ENCODE measurements at regions of chr20 and their contacts with region 1.

Region 1: GRCh38 chr20:5100684-5101347 is 18.9 kb downstream of the PCNA start:
- DNase-seq: peak; percentile 39 to 85 (median 78)
- ATAC-seq: peak; percentile 96
- H3K4me3 ChIP-seq: no peak overlapping the region
- H3K4me3 Mint-ChIP-seq: no peak overlapping the region
- H3K27ac ChIP-seq: peak overlapping the region in 1 of 2 experiments; percentile 49
- H3K27ac Mint-ChIP-seq: peak overlapping the region; percentile 57
- H3K4me1 ChIP-seq: peaks cover 3% of the 10 kb centered on the region
- H3K4me1 Mint-ChIP-seq: peaks cover 8% of the 10 kb centered on the region
- H3K27me3 ChIP-seq: no peaks in the 10 kb centered on the region
- H3K27me3 Mint-ChIP-seq: no peaks in the 10 kb centered on the region
- CTCF ChIP-seq: peak; percentile 94

Region 2: DNA sequence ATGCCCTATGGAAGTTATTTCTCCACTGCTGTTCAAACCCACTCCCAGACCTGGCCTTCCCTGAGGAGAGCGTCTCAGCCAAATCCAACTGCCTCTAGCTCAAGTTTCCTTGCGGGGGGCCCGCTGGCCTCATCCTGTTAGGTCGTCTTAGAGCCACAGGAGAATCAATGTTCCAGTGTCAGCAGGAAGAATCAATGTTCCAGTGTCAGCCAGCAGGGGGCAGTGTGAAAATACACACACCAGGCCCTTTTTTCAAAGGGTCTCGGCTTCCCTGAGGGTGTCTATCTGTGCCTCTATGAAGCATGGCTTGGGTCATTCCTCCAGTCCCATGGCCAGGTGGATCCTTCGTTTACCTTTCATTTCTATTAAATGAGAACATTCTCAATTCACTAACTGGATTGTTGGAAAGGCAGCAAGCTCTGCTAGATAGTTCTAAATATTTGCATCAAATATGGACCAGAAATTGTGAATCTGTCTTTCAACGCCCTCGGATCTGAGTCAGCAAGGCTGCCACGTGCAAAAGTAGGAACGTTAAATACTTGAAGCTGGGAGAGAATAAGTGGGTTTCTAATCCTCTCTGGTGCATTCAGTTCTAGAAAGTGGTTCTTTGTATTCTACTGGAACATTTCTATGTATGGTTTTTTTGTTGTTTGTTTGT is 359.9 kb before region 1 on chr20:
- CTCF ChIA-PET with region 1: interaction called, 10 read pairs
- POLR2A ChIA-PET with region 1: no interaction called
- intact Hi-C with region 1: loop called in 1 of 2 experiments (anchors 5 kb)
- DNase-seq: peak; percentile 42 to 78 (median 66)
- ATAC-seq: peak; percentile 61
- H3K4me3 ChIP-seq: no peak overlapping the region
- H3K4me3 Mint-ChIP-seq: no peak overlapping the region
- H3K27ac ChIP-seq: no peak overlapping the region
- H3K27ac Mint-ChIP-seq: no peak overlapping the region
- H3K4me1 ChIP-seq: no peaks in the 10 kb centered on the region
- H3K4me1 Mint-ChIP-seq: no peaks in the 10 kb centered on the region
- H3K27me3 ChIP-seq: no peaks in the 10 kb centered on the region
- H3K27me3 Mint-ChIP-seq: peaks cover 11% of the 10 kb centered on the region
- CTCF ChIP-seq: peak; percentile 92

Region 3: DNA sequence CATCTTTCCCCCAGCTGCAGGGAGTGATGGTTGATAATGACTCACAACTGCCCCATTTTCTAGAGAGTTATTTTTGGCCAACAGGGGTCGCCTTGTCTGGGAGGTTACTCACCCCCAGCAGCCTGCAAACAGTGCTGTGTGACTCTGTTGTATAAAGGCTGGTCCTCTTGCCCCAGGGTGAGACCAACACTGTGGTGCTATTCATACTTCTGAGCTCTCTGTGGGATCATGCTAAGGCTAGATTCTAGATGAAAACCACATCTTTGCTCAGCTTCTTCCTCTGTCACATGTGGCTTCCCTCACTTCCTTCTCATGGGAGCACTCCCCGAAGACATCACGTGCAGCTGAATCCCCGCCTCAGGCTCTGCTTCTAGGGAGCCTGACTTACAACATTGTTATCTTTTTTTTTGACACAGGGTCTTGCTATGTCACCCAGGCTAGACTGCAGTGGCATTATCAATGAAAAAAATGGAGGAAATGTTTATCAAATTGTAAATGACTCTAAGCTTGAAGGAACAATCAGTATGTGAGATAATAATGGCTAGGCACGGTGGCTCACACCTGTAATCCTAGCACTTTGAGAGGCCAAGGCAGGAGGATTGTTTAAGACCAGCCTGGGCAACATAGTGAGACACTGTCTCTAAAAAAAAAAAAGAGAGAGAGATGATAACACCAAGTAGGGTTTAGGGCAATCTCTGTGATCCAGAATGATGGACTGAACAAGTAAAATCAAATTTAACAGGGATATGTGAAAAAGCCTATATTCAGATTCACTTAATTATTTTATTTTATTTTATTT is 43.8 kb before region 1 on chr20:
- CTCF ChIA-PET with region 1: interaction called, 48 read pairs
- POLR2A ChIA-PET with region 1: interaction called, 3 read pairs
- intact Hi-C with region 1: loop called (anchors 1 kb)
- DNase-seq: peak; percentile 44 to 93 (median 80)
- ATAC-seq: peak; percentile 96
- H3K4me3 ChIP-seq: no peak overlapping the region
- H3K4me3 Mint-ChIP-seq: peak overlapping the region; percentile 19
- H3K27ac ChIP-seq: peak overlapping the region in 1 of 2 experiments; percentile 52
- H3K27ac Mint-ChIP-seq: peak overlapping the region; percentile 64
- H3K4me1 ChIP-seq: peaks cover 22% of the 10 kb centered on the region
- H3K4me1 Mint-ChIP-seq: peaks cover 21% of the 10 kb centered on the region
- H3K27me3 ChIP-seq: no peaks in the 10 kb centered on the region
- H3K27me3 Mint-ChIP-seq: no peaks in the 10 kb centered on the region
- CTCF ChIP-seq: peak; percentile 40

Region 4: GRCh38 chr20:5090191-5090590 is 10.6 kb before region 1 on chr20:
- CTCF ChIA-PET with region 1: interaction called, 12 read pairs
- POLR2A ChIA-PET with region 1: interaction called, 3 read pairs
- intact Hi-C with region 1: no loop called
- DNase-seq: peak in 2 of 9 experiments; percentile 31 to 60
- ATAC-seq: no peak
- H3K4me3 ChIP-seq: no peak overlapping the region
- H3K4me3 Mint-ChIP-seq: no peak overlapping the region
- H3K27ac ChIP-seq: peak overlapping the region in 1 of 2 experiments; percentile 36
- H3K27ac Mint-ChIP-seq: peak overlapping the region; percentile 80
- H3K4me1 ChIP-seq: peaks cover 12% of the 10 kb centered on the region
- H3K4me1 Mint-ChIP-seq: peaks cover 9% of the 10 kb centered on the region
- H3K27me3 ChIP-seq: no peaks in the 10 kb centered on the region
- H3K27me3 Mint-ChIP-seq: no peaks in the 10 kb centered on the region
- CTCF ChIP-seq: no peak

Region 5: GRCh38 chr20:5126512-5127203 is 25.8 kb after region 1 on chr20 and contains the start of gene CDS2:
- CTCF ChIA-PET with region 1: interaction called, 10 read pairs
- POLR2A ChIA-PET with region 1: interaction called, 7 read pairs
- intact Hi-C with region 1: no loop called
- DNase-seq: peak; percentile 99 to 100 (median 100)
- ATAC-seq: peak; percentile 81
- H3K4me3 ChIP-seq: peak within 1 kb of the TSS; percentile 68 to 83
- H3K4me3 Mint-ChIP-seq: peak within 1 kb of the TSS; percentile 95
- H3K27ac ChIP-seq: peak within 1 kb of the TSS; percentile 98 to 99
- H3K27ac Mint-ChIP-seq: peak within 1 kb of the TSS; percentile 99
- H3K4me1 ChIP-seq: peaks cover 26% of the 10 kb centered on the region
- H3K4me1 Mint-ChIP-seq: peaks cover 33% of the 10 kb centered on the region
- H3K27me3 ChIP-seq: no peaks in the 10 kb centered on the region
- H3K27me3 Mint-ChIP-seq: no peaks in the 10 kb centered on the region
- CTCF ChIP-seq: peak; percentile 54
- total RNA-seq, gene CDS2: 68.7 to 70.9 TPM